CD4-positive, alpha-beta memory T cell (primary cell): ENCODE measurements at regions of chr11 and their contacts with region 1.

Region 1: GRCh38 chr11:123083623-123084029 is 21.7 kb upstream of the HSPA8 start:
- DNase-seq: peak; percentile 56 to 91 (median 72)
- H3K4me3 ChIP-seq: peak overlapping the region in 1 of 2 donors; percentile 3
- H3K4me3 Mint-ChIP-seq: peak overlapping the region; percentile 73 to 88 (median 78)
- H3K27ac ChIP-seq: peak overlapping the region; percentile 45
- H3K27ac Mint-ChIP-seq: peak overlapping the region; percentile 93 to 96 (median 93)
- H3K4me1 ChIP-seq: peaks cover 57% of the 10 kb centered on the region
- H3K4me1 Mint-ChIP-seq: peaks cover 31 to 66% (median 50%) of the 10 kb centered on the region in 4 donors
- H3K27me3 ChIP-seq: no peaks in the 10 kb centered on the region
- H3K27me3 Mint-ChIP-seq: no peaks in the 10 kb centered on the region

Region 2: DNA sequence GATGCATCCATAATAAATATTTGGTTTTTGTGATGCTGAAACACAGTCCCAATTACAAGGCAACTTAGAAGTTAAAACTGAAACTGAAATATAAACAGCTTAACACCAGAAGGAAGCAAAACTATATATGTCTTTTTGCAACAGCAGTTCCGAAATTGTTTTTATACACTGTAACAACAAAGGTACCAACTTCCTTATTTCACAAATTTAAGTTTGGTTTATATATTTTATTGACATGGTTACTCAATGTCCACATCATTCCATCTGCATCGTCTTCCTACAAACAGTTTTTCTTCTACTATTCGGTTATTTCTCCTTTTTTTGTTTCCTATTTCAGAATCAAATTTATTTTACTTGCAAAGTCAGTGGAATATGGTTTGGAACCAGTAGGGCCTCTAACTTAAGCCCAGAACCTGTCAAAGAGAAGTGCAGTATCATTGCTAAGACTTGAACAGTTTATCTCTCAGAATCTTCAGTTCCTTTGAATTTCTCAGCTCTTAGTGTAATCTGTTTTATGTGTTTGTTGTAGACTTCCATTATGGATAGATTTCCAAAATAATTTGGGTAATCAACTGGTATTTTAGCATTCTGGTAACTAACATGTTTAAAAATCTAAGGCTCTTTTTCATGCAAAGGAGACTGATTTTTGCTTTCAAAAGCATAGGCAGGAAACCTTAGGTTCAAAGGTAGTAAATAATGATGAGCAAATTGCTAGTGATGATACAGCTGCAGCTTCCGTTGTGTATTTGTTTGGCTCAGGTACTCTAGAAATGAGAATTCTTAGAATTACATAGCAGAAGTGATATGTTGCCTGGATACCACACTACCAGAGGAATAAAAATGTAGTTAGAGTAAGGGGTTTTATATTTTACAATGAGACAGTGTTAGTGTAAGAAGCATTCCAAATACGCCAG is 13.5 kb before region 1 on chr11:
- CTCF ChIA-PET with region 1: interaction called, 69 read pairs
- POLR2A ChIA-PET with region 1: interaction called, 891 read pairs
- intact Hi-C with region 1: loop called (anchors 1 kb)
- DNase-seq: peak; percentile 58 to 73 (median 59)
- H3K4me3 ChIP-seq: peak overlapping the region; percentile 11 to 39
- H3K4me3 Mint-ChIP-seq: peak overlapping the region; percentile 81 to 94 (median 88)
- H3K27ac ChIP-seq: peak overlapping the region; percentile 69
- H3K27ac Mint-ChIP-seq: peak overlapping the region; percentile 90 to 100 (median 97)
- H3K4me1 ChIP-seq: peaks cover 71% of the 10 kb centered on the region
- H3K4me1 Mint-ChIP-seq: peaks cover 46 to 69% (median 56%) of the 10 kb centered on the region in 4 donors
- H3K27me3 ChIP-seq: no peaks in the 10 kb centered on the region
- H3K27me3 Mint-ChIP-seq: no peaks in the 10 kb centered on the region